Heart right ventricle (tissue), 16 donors: ENCODE measurements at regions of chr13 and their contacts with region 1.

Region 1: DNA sequence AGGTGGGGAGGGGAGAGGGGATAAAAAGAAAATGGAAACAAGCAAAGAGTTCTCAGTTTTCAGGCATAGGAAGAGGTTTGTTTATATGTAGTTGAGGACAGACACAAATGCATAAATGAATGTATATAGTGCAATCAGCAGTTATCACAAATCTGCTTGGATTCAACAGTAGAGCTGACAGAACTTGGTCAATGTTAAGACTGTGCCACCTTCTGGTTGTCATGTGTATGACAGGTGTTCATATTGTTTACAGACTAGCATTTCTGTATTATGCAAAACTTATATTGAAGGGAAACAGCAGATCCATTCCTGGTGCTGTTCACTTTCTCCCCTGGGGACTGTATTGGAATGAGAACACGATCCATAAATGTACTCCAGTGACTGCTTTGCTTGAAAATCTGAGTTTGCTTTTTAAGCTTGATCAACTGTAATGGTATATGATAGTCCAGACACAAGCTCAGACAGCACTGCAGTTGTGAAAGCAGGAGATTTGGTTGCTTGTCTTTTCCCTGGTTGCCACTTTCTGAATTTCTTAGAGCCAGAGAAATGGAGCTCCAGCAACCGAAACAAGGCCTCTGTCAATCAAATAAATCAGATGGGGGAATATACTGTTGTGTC is 319.5 kb upstream of the OBI1 start:
- DNase-seq: peak in 1 of 2 donors; percentile 47
- ATAC-seq: peak in 3 of 8 donors; percentile 42 to 69 (median 55)
- H3K4me3 ChIP-seq: no peak overlapping the region
- H3K27ac ChIP-seq: no peak overlapping the region
- H3K4me1 ChIP-seq: no peaks in the 10 kb centered on the region
- H3K27me3 ChIP-seq: peaks cover 0 to 22% (median 9%) of the 10 kb centered on the region in 7 donors
- CTCF ChIP-seq: peak; percentile 35 to 79 (median 71)

Region 2: GRCh38 chr13:77779552-77780272 is 1198.8 kb before region 1 on chr13:
- intact Hi-C with region 1: loop called in 1 of 10 experiments (anchors 10 kb)
- DNase-seq: peak in 1 of 2 donors; percentile 59
- ATAC-seq: peak in 7 of 8 donors; percentile 41 to 84 (median 67)
- H3K4me3 ChIP-seq: no peak overlapping the region
- H3K27ac ChIP-seq: peak overlapping the region in 1 of 10 donors; percentile 34
- H3K4me1 ChIP-seq: peaks cover 0 to 9% (median 0%) of the 10 kb centered on the region in 9 donors
- H3K27me3 ChIP-seq: no peaks in the 10 kb centered on the region
- CTCF ChIP-seq: peak; percentile 53 to 85 (median 76)

Region 3: DNA sequence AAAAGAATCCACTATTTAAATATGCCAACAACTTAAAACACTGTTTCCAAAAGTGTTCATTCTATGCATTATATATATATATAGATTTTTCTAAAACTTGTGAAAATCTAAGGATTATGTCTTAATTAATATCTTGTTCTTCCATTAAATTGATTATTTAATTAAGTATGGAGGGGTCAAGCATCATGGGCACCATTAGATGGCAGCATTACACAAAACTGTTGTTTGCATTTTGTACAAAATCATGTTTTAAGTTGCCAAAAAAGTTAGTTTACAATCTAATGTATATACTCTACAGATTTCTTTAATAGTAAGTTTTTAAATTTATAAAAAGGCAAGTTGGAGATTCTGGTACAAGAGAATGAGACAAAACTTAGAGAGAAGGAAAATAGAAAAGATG is 846.7 kb before region 1 on chr13:
- intact Hi-C with region 1: loop called in 9 of 10 experiments (anchors 1 to 5 kb)
- DNase-seq: no peak
- ATAC-seq: no peak
- H3K4me3 ChIP-seq: no peak overlapping the region
- H3K27ac ChIP-seq: no peak overlapping the region
- H3K4me1 ChIP-seq: no peaks in the 10 kb centered on the region
- H3K27me3 ChIP-seq: peaks cover 0 to 7% (median 0%) of the 10 kb centered on the region in 7 donors
- CTCF ChIP-seq: peak in 1 of 9 donors; percentile 22

Region 4: DNA sequence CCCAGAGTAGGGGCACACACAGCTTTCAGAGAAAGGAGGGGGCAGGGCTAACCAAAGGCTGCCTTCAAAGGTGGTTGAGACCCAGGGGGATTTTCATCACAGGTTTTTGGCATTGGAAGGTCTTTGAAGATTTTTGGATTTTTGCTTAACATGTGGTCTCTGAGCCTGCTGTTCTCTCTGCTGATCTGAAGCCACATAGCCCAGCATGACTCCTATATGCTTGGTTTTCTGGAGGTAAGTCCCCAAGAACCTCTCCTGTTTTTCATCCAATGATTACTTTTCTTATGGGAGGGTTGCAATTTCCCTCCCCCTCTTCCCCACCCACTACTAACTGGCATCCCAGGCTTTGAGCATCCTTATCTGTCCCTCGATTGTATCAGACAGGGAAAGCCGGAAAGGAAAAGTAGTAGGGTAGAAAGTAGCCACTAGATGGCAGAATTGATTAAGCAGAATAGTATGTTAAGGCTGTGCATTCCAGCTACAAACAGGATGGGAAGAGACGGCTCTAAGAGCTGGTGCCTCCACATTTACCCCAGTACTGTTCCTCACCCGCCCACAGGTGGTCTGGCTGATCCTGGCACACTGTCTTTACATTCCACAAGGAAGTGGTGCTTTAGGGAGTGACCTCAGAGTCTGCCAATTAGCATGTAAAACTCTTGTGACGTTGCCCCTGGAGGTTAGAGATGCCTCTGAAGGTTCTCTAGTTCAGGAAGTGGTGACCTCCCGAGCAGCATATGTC is 840.9 kb before region 1 on chr13:
- intact Hi-C with region 1: loop called in 9 of 10 experiments (anchors 1 to 5 kb)
- DNase-seq: no peak
- ATAC-seq: peak; percentile 49 to 85 (median 72)
- H3K4me3 ChIP-seq: no peak overlapping the region
- H3K27ac ChIP-seq: no peak overlapping the region
- H3K4me1 ChIP-seq: peaks cover 0 to 6% (median 0%) of the 10 kb centered on the region in 9 donors
- H3K27me3 ChIP-seq: peaks cover 0 to 3% (median 0%) of the 10 kb centered on the region in 7 donors
- CTCF ChIP-seq: peak; percentile 46 to 79 (median 69)

Region 5: DNA sequence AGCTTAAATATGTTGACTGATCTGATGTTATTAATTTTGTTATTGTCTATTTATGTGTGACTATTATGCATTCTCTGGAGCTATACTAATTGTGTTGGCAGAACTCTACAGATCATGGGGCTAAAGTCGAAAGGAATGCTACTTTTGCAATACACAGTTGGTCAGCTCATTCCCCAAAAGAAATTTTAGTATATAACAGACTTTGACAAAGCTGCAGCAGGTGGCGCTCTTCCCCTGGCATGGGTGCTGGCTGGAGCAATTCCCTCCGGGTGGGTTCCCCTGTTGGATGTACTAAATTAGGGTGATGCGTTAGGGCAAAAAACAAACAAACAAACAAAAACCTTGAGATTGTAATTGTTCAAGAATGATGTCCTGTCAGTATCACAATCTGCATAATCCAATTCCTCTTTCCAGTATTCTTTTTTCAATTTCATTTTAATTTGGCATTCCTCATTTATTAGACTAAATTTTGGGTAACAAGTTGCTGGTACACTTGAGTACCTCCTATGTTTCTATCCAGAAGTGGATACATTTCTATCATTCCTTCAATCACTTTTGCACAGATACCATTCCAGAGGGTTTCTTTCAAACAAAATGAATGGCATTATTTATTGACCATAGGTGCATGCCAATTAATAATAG is 737.1 kb before region 1 on chr13:
- intact Hi-C with region 1: loop called in 5 of 10 experiments (anchors 2 to 10 kb)
- DNase-seq: peak in 1 of 2 donors; percentile 14
- ATAC-seq: no peak
- H3K4me3 ChIP-seq: no peak overlapping the region
- H3K27ac ChIP-seq: no peak overlapping the region
- H3K4me1 ChIP-seq: no peaks in the 10 kb centered on the region
- H3K27me3 ChIP-seq: peaks cover 0 to 3% (median 0%) of the 10 kb centered on the region in 7 donors
- CTCF ChIP-seq: peak in 8 of 9 donors; percentile 5 to 59 (median 46)

Region 6: GRCh38 chr13:78317030-78317429 is 661.5 kb before region 1 on chr13:
- intact Hi-C with region 1: loop called in 6 of 10 experiments (anchors 5 to 10 kb)
- DNase-seq: no peak
- ATAC-seq: peak in 2 of 8 donors; percentile 41 to 71
- H3K4me3 ChIP-seq: no peak overlapping the region
- H3K27ac ChIP-seq: no peak overlapping the region
- H3K4me1 ChIP-seq: no peaks in the 10 kb centered on the region
- H3K27me3 ChIP-seq: peaks cover 0 to 3% (median 0%) of the 10 kb centered on the region in 7 donors
- CTCF ChIP-seq: peak in 8 of 9 donors; percentile 16 to 66 (median 50)

Region 7: DNA sequence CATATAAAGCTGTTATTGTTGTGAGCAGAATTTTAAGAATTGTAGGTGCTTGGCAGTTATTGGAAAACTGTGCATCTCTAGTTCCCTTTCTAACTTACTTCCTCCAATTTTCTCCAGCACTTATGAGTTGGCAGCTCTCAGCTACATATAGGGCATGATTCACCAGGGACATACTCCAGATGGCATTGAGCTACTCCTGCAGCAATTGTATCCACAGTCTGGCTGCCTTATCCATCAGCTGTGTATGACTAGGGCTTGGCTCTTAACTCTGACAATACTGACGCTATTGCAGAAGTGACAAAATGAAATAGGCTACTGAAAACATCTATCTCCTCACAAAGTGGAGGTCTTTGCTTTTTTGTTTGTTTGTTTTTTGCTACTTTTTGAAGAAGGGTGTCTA is 651.9 kb before region 1 on chr13:
- intact Hi-C with region 1: loop called in 1 of 10 experiments (anchors 10 kb)
- DNase-seq: no peak
- ATAC-seq: no peak
- H3K4me3 ChIP-seq: no peak overlapping the region
- H3K27ac ChIP-seq: no peak overlapping the region
- H3K4me1 ChIP-seq: no peaks in the 10 kb centered on the region
- H3K27me3 ChIP-seq: no peaks in the 10 kb centered on the region
- CTCF ChIP-seq: no peak

Region 8: GRCh38 chr13:79141082-79141481 is 162.6 kb after region 1 on chr13:
- intact Hi-C with region 1: no loop called
- DNase-seq: no peak
- ATAC-seq: no peak
- H3K4me3 ChIP-seq: no peak overlapping the region
- H3K27ac ChIP-seq: no peak overlapping the region
- H3K4me1 ChIP-seq: no peaks in the 10 kb centered on the region
- H3K27me3 ChIP-seq: no peaks in the 10 kb centered on the region
- CTCF ChIP-seq: no peak